ENCODE measurements at regions of chr3 and their contacts with region 1.

Region 1: DNA sequence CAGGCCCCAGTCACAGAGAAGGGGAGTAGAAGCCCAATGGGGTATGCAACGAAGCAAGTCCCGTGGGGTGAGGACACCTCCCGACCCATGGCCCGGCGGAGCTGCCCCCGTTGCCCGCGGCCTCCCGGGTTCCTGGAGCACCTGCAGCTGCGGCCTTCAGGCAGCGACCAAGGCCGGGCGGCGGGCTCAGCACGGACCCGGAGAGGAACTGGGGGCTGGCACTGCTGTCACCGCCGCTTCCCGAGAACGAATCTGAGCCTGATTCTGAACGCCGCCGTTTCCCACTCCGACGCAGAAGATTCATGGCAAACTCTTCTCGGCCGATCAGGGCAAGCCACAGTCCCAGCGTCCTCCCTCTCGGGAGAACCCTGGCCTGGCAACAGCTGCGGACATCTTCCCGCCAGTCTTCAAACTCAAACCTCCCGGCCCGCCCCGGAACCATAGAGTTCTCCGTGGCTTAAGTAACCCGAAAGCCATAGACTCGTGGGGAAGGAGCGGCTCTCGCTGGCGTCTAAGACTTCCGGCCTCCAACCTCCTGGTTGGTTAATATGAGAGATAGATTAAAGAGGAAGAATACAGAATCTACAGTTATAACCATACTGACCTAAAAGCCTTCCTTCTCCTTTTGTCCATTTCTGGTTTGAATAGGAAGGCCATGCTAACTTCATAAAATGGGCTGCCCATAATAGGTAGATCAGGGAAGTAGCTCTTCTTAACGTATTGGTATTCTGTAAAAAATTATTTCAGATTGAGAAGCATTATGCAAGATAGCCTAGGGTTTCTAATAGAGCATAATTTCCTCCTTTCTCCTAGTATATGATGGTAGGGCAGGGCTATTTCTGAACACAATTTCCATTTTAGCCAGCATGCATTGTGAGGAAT is at the start of gene POLQ:
- DNase-seq: peak; percentile 87 to 93
- ATAC-seq: peak; percentile 97 to 99 (median 98)
- H3K4me3 ChIP-seq: peak within 1 kb of the TSS; percentile 75
- H3K27ac ChIP-seq: peak within 1 kb of the TSS; percentile 80
- H3K4me1 ChIP-seq: peaks cover 6% of the 10 kb centered on the region
- H3K27me3 ChIP-seq: no peaks in the 10 kb centered on the region
- CTCF ChIP-seq: no peak
- total RNA-seq, gene POLQ: 0.13 to 0.90 (median 0.50) TPM

Region 2: DNA sequence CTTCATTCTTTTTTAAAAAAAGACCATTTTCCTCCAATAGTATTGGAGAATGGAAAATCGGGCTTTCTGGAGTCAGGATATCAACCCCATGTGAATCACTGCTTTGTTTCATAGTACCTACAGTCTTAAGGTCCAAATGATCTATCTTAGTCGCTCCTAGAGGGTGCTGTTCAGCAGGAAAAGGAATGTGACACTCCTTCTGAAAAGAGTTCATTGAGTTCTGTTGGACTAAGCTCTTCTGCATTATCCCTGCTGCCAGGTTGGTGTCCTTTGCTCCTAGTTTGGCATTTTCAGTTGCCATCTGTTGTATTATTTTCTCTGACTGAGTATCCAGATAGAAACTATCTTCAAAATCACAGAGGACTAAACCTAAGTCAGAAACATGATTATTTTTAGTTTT is 57.2 kb before region 1 on chr3:
- intact Hi-C with region 1: no loop called
- DNase-seq: no peak
- ATAC-seq: no peak
- H3K4me3 ChIP-seq: no peak overlapping the region
- H3K27ac ChIP-seq: no peak overlapping the region
- H3K4me1 ChIP-seq: no peaks in the 10 kb centered on the region
- H3K27me3 ChIP-seq: no peaks in the 10 kb centered on the region
- CTCF ChIP-seq: no peak

Region 3: GRCh38 chr3:121584418-121584817 is 38.6 kb after region 1 on chr3:
- intact Hi-C with region 1: no loop called
- DNase-seq: no peak
- ATAC-seq: no peak
- H3K4me3 ChIP-seq: no peak overlapping the region
- H3K27ac ChIP-seq: no peak overlapping the region
- H3K4me1 ChIP-seq: no peaks in the 10 kb centered on the region
- H3K27me3 ChIP-seq: no peaks in the 10 kb centered on the region
- CTCF ChIP-seq: no peak

Region 4: GRCh38 chr3:121601212-121601812 is 55.5 kb after region 1 on chr3:
- intact Hi-C with region 1: no loop called
- DNase-seq: no peak
- ATAC-seq: peak; percentile 51 to 80 (median 72)
- H3K4me3 ChIP-seq: peak overlapping the region; percentile 5
- H3K27ac ChIP-seq: peak overlapping the region; percentile 69
- H3K4me1 ChIP-seq: peaks cover 34% of the 10 kb centered on the region
- H3K27me3 ChIP-seq: no peaks in the 10 kb centered on the region
- CTCF ChIP-seq: no peak

Region 5: GRCh38 chr3:121648219-121648958 is 102.6 kb after region 1 on chr3:
- intact Hi-C with region 1: loop called (anchors 5 to 10 kb)
- DNase-seq: no peak
- ATAC-seq: peak; percentile 84 to 99 (median 99)
- H3K4me3 ChIP-seq: no peak overlapping the region
- H3K27ac ChIP-seq: peak overlapping the region; percentile 48
- H3K4me1 ChIP-seq: peaks cover 14% of the 10 kb centered on the region
- H3K27me3 ChIP-seq: no peaks in the 10 kb centered on the region
- CTCF ChIP-seq: peak; percentile 7

Region 6: DNA sequence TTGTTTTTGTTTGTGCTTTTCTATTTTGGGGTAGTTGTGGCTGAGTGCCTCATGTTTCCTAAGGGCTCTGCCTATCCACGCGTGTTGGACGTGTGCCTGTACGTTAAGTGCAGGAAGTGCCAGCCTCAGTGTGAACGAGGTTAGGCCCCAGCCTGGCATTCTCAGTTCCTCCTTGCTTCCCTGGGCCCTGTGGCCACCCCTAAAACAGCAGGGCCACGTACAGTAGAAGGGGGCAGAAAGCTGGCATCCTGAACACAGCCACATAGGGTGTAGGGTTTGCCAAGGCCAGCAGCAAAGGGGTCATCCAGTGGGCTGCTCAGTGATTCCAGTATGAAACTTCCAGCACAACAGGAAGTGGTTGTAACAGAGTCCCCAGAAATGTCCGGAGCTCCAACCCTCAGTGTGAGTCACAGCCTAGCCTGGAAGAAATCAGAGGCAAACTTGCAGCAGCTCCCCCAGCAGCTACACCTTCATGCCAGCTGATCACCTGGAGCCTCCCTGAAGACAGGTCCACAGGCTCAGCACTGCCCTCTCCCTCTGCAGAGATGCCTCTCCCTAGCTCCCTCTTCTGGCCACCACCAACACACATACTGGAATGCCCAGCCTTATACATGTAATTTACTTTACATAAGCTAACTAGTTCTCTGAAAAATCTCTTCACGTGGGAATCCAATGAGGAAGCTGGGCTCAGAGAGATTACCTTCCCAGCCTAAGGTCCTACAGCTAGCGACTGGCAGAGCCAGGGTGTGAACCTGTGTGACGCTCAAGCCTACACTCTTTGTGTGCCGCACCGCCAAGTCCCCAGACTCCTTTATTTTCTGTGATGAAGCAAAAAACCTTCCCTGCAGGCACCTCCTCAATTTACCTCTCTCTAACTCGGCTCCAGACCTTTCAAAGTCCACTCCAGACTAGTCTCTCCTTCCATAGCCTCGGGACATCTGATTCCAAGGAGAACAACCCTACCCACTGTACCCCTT is 449.6 kb after region 1 on chr3:
- intact Hi-C with region 1: loop called (anchors 5 to 10 kb)
- DNase-seq: peak; percentile 39 to 64
- ATAC-seq: peak; percentile 65 to 72 (median 67)
- H3K4me3 ChIP-seq: no peak overlapping the region
- H3K27ac ChIP-seq: peak overlapping the region; percentile 30
- H3K4me1 ChIP-seq: no peaks in the 10 kb centered on the region
- H3K27me3 ChIP-seq: no peaks in the 10 kb centered on the region
- CTCF ChIP-seq: peak; percentile 26

Region 7: GRCh38 chr3:122356415-122356814 is 810.6 kb after region 1 on chr3:
- intact Hi-C with region 1: loop called in 1 of 2 experiments (anchors 10 kb)
- DNase-seq: no peak
- ATAC-seq: peak in 1 of 4 donors; percentile 60
- H3K4me3 ChIP-seq: no peak overlapping the region
- H3K27ac ChIP-seq: no peak overlapping the region
- H3K4me1 ChIP-seq: no peaks in the 10 kb centered on the region
- H3K27me3 ChIP-seq: no peaks in the 10 kb centered on the region
- CTCF ChIP-seq: peak; percentile 22

Region 8: GRCh38 chr3:122679085-122679881 is 1133.5 kb after region 1 on chr3:
- intact Hi-C with region 1: loop called in 1 of 2 experiments (anchors 10 kb)
- DNase-seq: peak; percentile 82 to 84
- ATAC-seq: peak; percentile 70 to 88 (median 78)
- H3K4me3 ChIP-seq: peak overlapping the region; percentile 78
- H3K27ac ChIP-seq: peak overlapping the region; percentile 74
- H3K4me1 ChIP-seq: no peaks in the 10 kb centered on the region
- H3K27me3 ChIP-seq: no peaks in the 10 kb centered on the region
- CTCF ChIP-seq: peak; percentile 76

Measured in psoas muscle (tissue), 8 donors.